Activated naive CD4-positive, alpha-beta T cell treated with anti-CD3 and anti-CD28 coated beads, Interleukin-2, amount 10 ng/mL, durations not matched to agents 7 days and 5 days (primary cell): ENCODE measurements at regions of chr1 and their contacts with region 1.

Region 1: DNA sequence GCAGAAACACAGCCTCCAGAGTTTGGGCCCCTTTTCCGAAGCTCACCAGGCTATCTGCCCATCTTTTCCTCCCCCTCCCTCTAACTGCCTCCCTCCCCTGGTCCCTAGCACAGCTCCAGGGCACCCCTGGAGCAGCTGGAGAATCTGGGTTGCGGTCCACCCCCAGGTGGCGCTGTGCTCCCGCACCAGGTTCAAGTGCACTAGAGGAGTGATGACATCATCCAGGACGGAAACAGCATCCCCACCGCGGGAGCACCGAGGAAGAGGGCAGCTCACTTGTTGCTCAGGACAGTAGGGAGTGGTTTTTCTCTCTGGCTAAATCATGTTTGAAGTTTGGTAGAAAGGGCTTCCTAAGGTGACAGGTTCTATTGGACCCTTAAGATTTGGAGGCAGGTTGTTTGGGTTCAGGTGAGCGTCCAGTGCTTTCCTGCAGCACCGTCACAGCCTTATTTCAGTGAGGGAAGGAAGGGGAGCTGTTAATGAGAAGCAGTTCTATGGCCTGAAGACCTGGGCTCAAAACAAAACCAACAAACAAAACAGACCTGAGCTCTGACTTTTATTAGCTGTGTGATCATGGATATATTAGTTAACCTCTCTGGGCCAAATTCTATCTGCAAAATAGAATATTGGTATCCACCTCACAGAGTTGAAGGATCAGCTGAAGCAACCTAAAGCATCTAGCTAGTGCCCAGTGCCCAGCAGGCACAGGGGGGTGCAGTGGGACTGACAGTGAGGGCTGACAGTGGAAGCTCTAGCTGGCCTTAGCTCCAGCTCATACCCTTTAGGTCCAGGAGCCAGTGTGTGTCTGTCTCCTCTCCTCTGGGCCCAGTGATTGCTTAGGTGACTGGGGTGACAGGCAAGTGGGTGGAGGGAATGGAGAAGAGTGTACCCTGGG is 7.5 kb downstream of the SHISA4 start:
- DNase-seq: peak; percentile 92
- H3K4me3 Mint-ChIP-seq: no peak overlapping the region
- H3K27ac Mint-ChIP-seq: peak overlapping the region; percentile 54
- H3K4me1 Mint-ChIP-seq: peaks cover 23% of the 10 kb centered on the region
- H3K27me3 Mint-ChIP-seq: peaks cover 45% of the 10 kb centered on the region

Region 2: GRCh38 chr1:201637680-201638079 is 258.5 kb before region 1 on chr1:
- CTCF ChIA-PET with region 1: no interaction called
- DNase-seq: no peak
- H3K4me3 Mint-ChIP-seq: no peak overlapping the region
- H3K27ac Mint-ChIP-seq: no peak overlapping the region
- H3K4me1 Mint-ChIP-seq: no peaks in the 10 kb centered on the region
- H3K27me3 Mint-ChIP-seq: peaks cover 22% of the 10 kb centered on the region

Region 3: DNA sequence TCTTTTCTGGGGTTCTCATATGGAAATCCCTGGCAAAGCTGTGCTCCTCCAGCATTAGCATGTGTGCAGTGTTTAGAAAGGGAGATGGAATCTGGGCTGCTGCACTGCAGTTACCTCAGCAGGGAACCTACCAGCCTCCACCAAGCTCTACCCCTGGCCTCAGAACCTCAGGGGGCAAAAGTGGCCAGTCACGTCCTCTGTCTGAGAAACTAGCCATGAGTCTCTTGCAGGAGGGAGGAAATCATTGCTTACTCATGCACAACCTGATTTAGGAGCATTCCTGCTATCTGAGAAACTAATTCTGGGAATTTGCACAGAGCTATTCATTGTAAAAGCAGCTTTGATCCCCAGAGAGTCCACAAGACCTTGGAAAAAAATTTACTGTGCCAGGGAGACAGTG is 147.8 kb before region 1 on chr1:
- CTCF ChIA-PET with region 1: no interaction called
- DNase-seq: no peak
- H3K4me3 Mint-ChIP-seq: no peak overlapping the region
- H3K27ac Mint-ChIP-seq: no peak overlapping the region
- H3K4me1 Mint-ChIP-seq: peaks cover 10% of the 10 kb centered on the region
- H3K27me3 Mint-ChIP-seq: peaks cover 15% of the 10 kb centered on the region

Region 4: GRCh38 chr1:201850053-201850397 is 46.1 kb before region 1 on chr1:
- CTCF ChIA-PET with region 1: no interaction called
- DNase-seq: no peak
- H3K4me3 Mint-ChIP-seq: no peak overlapping the region
- H3K27ac Mint-ChIP-seq: no peak overlapping the region
- H3K4me1 Mint-ChIP-seq: peaks cover 2% of the 10 kb centered on the region
- H3K27me3 Mint-ChIP-seq: no peaks in the 10 kb centered on the region

Region 5: GRCh38 chr1:201877877-201878401 is 18.2 kb before region 1 on chr1:
- CTCF ChIA-PET with region 1: interaction called, 13 read pairs
- DNase-seq: peak; percentile 34
- H3K4me3 Mint-ChIP-seq: no peak overlapping the region
- H3K27ac Mint-ChIP-seq: no peak overlapping the region
- H3K4me1 Mint-ChIP-seq: no peaks in the 10 kb centered on the region
- H3K27me3 Mint-ChIP-seq: no peaks in the 10 kb centered on the region

Region 6: DNA sequence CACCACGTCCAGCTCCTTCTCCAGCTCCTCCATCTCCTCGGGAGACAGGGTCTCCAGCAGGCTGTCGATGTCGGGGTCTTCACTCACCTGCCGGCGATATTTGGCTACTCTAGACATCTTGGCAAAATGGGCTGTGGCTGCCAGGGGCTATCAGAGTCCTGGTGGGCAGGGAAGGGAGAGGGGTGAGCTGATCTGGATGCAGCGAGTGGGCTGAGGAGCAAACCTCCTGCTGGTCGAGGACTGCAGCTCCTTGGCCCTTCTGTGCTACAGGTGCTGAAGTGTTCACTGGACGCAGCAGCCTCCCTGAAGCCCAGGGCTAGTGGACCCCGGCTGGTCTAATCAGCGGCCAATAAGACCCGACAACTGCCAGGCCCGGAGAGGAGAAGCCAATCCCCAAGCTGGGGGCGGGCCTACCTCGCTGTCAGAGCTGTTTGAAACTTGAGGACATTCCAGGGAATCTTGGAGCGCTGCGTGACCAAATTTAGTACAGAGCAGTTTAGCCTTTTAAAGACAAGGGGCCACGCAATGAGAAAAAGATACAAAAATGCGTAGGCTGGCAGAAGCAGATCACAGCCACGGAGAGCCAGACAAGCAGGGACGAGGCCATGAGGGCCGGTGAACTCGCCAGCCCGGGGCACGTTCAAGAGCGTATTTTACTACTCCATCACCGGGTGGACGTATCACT is 50.2 kb after region 1 on chr1 and contains the start of gene LMOD1:
- CTCF ChIA-PET with region 1: interaction called, 12 read pairs
- DNase-seq: no peak
- H3K4me3 Mint-ChIP-seq: no peak within 1 kb of the TSS
- H3K27ac Mint-ChIP-seq: no peak within 1 kb of the TSS
- H3K4me1 Mint-ChIP-seq: peaks cover 10% of the 10 kb centered on the region
- H3K27me3 Mint-ChIP-seq: peaks cover 75% of the 10 kb centered on the region

Region 7: GRCh38 chr1:201964261-201964660 is 68.1 kb after region 1 on chr1:
- CTCF ChIA-PET with region 1: interaction called, 12 read pairs
- DNase-seq: no peak
- H3K4me3 Mint-ChIP-seq: no peak overlapping the region
- H3K27ac Mint-ChIP-seq: no peak overlapping the region
- H3K4me1 Mint-ChIP-seq: no peaks in the 10 kb centered on the region
- H3K27me3 Mint-ChIP-seq: no peaks in the 10 kb centered on the region

Region 8: GRCh38 chr1:201999625-202000238 is 103.6 kb after region 1 on chr1:
- CTCF ChIA-PET with region 1: interaction called, 29 read pairs
- DNase-seq: peak; percentile 48
- H3K4me3 Mint-ChIP-seq: no peak overlapping the region
- H3K27ac Mint-ChIP-seq: no peak overlapping the region
- H3K4me1 Mint-ChIP-seq: no peaks in the 10 kb centered on the region
- H3K27me3 Mint-ChIP-seq: no peaks in the 10 kb centered on the region